ENCODE measurements at regions of chr11 and their contacts with region 1.

Region 1: DNA sequence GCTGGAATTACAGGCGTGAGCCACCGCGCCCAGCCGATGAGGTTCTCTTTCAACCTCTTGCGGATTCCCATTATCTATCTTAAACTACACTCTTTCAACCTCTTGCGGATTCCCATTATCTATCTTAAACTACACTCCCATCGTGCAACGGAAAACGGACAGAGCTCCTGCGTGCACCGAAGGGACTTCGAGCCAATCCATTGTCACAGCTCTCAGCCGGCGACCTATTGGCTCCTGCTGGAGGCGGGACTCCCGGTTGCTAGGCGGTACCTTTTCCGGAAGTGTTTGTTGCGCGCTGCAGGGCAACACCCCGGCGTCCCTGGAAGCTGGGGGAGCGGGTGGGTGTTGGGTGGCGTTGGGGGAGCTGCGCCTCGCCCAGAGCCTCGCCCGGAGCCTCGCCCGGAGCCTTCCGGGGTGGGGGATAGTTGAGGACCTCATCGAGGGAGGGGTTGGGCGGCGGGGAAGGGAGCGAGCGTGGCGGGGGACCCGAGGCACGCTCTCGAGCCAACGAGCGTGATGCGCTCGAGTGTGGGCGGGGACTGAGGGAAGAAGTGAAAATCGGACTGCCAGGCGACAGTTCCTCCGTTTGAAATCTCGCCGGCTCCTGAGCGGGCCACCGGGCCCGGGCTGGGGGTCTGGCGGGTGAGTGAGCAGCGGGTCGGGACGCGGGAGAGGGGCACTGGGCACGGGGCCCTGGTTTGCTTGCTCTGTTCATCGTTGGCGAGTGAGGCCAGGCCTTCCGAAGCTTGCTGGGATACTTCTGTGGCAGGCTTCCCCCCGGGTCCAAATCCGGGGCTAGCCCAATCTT is at the start of gene CEP164:
- DNase-seq: peak; percentile 97
- H3K4me3 Mint-ChIP-seq: peak within 1 kb of the TSS; percentile 61
- H3K27ac Mint-ChIP-seq: peak within 1 kb of the TSS; percentile 71
- H3K4me1 Mint-ChIP-seq: peaks cover 3% of the 10 kb centered on the region
- H3K27me3 Mint-ChIP-seq: no peaks in the 10 kb centered on the region
- total RNA-seq, gene CEP164: 23.9 to 24.6 TPM

Region 2: DNA sequence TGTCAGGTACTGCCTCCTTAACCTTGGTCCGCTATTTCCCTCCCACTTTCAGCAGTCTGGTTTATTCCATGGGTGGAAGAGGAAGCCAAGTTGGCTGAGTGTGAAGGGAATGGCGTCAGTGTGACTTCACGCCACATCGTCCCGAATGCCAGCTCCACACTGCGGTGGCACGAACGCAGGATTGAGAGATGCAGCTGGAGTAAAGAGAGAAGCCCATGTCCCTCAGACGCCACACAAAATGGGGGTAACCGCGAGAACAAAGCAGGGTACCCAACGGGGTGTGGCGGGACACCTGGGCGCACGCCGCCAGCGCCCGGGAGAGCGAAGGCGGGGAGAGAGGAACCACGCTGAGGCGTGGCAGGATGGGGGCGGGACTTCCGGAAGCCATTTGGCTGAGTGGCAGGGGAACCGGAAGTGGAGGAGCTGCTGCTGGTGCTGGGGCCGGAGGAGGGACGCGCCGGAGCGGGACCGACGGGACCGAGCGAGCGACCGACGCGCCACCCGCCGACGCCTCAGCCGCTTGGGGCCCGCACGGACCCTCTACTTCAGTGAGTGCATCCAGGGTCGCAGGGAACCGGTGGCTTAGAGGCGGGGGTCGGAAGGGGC is 183.8 kb before region 1 on chr11 and contains the start of gene PAFAH1B2:
- CTCF ChIA-PET with region 1: no interaction called
- intact Hi-C with region 1: loop called (anchors 10 kb)
- DNase-seq: peak; percentile 98
- H3K4me3 Mint-ChIP-seq: peak within 1 kb of the TSS; percentile 95
- H3K27ac Mint-ChIP-seq: peak within 1 kb of the TSS; percentile 91
- H3K4me1 Mint-ChIP-seq: peaks cover 37% of the 10 kb centered on the region
- H3K27me3 Mint-ChIP-seq: no peaks in the 10 kb centered on the region
- total RNA-seq, gene PAFAH1B2: 43.7 to 44.3 TPM

Region 3: DNA sequence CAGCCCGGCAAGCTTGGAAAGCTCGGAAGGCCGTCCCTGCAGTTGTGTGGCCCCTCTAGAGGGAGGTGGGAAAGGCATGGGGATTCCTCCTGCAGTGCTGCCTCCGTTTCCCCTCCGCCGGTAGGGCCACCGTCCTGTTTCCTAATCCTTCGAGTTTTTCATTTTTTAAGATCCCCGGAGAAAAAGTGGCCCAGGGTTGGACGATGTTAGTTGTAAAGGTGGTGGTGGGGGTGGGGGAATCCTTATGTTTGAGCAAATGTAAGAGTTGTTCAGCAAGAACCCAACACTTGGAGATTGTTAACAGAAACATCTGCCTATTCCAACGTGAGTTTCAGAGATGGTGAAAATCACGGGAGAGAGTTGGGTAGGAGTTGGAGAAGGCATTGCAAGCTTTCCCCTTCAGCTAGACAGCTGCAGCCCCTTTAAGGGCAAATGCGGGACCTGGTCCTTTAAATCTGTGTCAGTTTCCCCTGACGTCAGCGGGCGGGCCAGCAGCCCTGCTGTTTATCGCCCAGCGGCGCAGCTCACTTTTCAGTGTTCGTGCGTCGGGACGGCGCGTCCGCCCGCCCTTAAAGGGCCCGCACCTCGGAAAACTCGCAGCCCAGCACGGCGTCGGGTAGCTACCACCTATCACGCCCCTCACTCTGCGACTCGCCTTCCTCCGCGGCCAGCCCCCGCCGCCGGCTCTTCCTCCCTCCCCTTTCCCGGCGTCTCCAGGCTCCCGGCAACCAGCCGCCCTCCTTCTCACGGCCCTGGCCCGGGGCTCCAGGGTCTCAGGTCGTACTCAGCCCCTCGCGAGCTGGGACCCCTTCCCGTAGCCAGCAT is 149.3 kb before region 1 on chr11 and contains the start of gene SIDT2:
- CTCF ChIA-PET with region 1: no interaction called
- intact Hi-C with region 1: loop called (anchors 2 kb)
- DNase-seq: peak; percentile 92
- H3K4me3 Mint-ChIP-seq: peak within 1 kb of the TSS; percentile 93
- H3K27ac Mint-ChIP-seq: peak within 1 kb of the TSS; percentile 79
- H3K4me1 Mint-ChIP-seq: peaks cover 28% of the 10 kb centered on the region
- H3K27me3 Mint-ChIP-seq: no peaks in the 10 kb centered on the region
- total RNA-seq, gene SIDT2: 23.9 to 25.6 TPM

Region 4: DNA sequence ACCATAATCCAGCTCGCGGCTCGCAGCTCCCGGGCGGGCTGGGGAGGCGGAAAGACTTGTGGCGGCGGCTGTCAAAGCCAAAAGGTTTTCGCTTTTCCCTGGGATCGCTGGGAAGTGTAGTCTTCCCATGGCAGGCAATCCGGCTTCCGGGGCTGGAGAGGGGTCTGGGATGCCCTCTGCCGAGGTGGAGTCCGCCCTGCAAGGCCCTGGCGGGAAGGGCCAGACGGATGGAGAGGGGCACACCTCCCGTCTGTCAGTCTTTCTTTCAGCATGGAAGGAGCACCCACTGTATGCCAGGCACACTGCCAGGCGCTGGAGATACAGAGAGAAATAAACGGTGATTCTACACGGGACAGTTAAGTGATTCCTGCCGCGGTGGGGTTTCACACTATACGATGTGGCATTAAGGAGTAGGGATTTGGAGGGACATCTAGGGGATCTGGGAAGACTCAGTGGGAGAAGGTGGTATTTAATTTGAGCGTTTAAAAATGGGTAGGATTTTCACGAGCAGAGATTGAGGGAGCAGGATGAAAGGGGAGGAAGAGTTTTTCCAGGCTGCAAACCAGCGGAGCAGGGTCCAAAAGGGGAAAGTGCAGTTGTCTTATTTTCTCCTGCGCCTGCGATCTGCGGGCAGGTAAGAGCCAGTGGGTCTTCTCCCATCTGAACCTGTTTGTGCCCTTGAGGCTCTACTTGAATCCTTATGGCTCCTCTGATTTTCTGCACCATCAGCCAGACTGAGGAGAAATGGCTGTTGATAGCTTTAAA is 11.4 kb before region 1 on chr11 and contains the start of gene BACE1:
- CTCF ChIA-PET with region 1: no interaction called
- intact Hi-C with region 1: loop called (anchors 1 kb)
- DNase-seq: peak; percentile 47
- H3K4me3 Mint-ChIP-seq: peak within 1 kb of the TSS; percentile 68
- H3K27ac Mint-ChIP-seq: no peak within 1 kb of the TSS
- H3K4me1 Mint-ChIP-seq: peaks cover 6% of the 10 kb centered on the region
- H3K27me3 Mint-ChIP-seq: peaks cover 34% of the 10 kb centered on the region
- total RNA-seq, gene BACE1: 0.62 TPM

Region 5: DNA sequence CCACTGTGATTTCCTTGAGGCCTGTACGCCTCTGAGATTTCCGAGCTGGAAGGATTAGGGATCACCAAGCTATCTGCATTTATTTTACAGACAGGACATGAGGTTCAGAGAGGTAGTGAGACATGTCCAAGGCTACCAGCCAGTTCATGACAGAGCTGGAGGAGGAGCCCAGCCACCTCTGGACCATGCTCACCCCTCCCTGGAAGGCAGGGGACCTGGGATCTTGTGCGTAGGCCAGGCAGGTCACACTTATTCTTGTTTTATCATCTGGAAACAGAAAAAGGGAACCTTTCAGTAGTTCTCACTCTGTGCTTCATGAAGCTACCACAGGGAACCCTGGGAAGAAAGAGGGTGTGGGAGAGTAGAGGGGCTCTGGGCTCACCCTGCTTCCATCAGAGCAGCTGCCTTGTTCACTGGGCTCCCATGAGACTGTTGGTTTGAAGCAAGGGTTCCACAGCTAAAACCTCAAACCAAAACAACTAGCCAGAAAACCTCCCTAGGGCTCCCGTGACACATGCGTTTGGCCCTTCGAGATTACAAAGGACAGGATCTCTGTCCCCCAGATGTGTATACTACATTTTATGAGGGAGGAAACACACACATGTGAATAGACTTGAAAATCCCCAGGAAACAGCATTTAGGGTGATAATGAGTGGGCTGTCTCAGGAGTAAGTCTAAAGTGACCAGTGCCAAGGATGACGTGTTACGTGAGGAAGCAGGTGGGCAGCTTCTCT is 362.9 kb after region 1 on chr11:
- CTCF ChIA-PET with region 1: no interaction called
- intact Hi-C with region 1: no loop called
- DNase-seq: no peak
- H3K4me3 Mint-ChIP-seq: no peak overlapping the region
- H3K27ac Mint-ChIP-seq: no peak overlapping the region
- H3K4me1 Mint-ChIP-seq: no peaks in the 10 kb centered on the region
- H3K27me3 Mint-ChIP-seq: peaks cover 4% of the 10 kb centered on the region

Measured in activated naive CD4-positive, alpha-beta T cell treated with anti-CD3 and anti-CD28 coated beads for 36 hours (primary cell).